ENCODE measurements at regions of chr4 and their contacts with region 1.

Region 1: GRCh38 chr4:5998333-5998936 is 19.8 kb downstream of the C4orf50 start:
- DNase-seq: no peak
- ATAC-seq: peak; percentile 94
- H3K4me3 ChIP-seq: no peak overlapping the region
- H3K27ac ChIP-seq: no peak overlapping the region
- H3K4me1 ChIP-seq: peaks cover 11% of the 10 kb centered on the region
- H3K27me3 ChIP-seq: no peaks in the 10 kb centered on the region; a peak in 2 of 4 replicates
- CTCF ChIP-seq: peak; percentile 93 to 98 (median 94)
- EP300 ChIP-seq: no peak
- POLR2A ChIP-seq: no peak
- RAD21 ChIP-seq: peak; percentile 91

Region 2: DNA sequence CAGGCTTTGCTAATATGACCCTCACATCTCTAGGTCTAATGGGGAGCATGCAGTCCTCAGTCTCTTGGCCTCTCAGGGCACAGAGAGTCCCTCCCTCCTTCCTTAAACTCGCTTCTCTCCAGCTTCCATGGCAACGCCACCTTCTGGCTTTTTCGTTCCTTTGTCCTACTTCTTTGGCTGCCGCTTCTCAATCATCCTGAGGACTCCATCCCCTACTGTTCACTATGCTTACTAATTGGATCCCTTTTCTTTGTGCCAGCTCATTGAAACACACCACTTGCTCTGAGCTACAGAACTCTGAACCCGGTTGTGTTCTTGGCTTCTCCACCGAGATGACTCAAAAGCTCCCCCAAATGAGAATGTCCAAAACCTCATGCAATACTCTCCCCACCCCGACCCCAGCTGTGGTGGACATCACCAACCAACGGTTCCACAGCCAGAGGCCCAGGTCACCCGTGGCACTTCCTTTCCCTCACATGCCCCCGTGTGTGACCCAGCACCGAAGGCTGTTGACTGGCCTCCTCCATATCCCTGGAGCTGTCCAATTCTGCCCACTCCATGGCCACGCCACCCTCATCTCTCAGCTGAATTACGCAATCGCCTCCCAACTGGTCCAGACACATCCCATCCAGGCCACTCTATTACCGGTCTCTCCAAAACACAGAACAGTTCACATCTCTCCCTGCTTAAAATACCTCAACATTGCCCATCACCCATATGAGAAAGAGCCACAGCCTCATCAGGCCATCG is 140.2 kb before region 1 on chr4:
- CTCF ChIA-PET with region 1: no interaction called
- POLR2A ChIA-PET with region 1: no interaction called
- RAD21 ChIA-PET with region 1: no interaction called
- SMC1A ChIA-PET with region 1: no interaction called
- in situ Hi-C with region 1: no loop called
- intact Hi-C with region 1: no loop called
- DNase-seq: no peak
- ATAC-seq: no peak
- H3K4me3 ChIP-seq: no peak overlapping the region
- H3K27ac ChIP-seq: no peak overlapping the region
- H3K4me1 ChIP-seq: no peaks in the 10 kb centered on the region
- H3K27me3 ChIP-seq: no peaks in the 10 kb centered on the region; a peak in 1 of 4 replicates
- CTCF ChIP-seq: no peak
- EP300 ChIP-seq: no peak
- POLR2A ChIP-seq: no peak
- RAD21 ChIP-seq: no peak

Region 3: DNA sequence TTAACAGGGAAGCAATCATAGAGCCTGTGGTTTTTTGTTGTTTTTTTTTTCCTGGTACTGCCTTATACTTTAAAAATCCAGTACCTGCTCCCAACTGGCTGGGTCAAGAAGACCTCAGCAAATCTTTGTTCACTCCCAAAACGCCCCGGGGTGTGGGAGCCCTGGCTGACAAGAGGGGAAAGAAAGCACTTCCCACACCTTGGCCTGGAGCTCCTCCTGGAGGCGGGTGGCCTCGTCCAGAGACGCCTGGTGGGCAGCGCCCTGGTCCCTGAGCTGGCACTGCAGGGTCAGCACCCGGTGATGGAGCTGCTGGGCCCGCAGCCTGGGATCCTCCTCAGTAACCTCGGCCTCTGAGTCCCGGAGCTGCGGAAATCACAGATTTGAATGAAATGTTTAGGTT is 18.5 kb before region 1 on chr4:
- CTCF ChIA-PET with region 1: interaction called, 21 read pairs
- POLR2A ChIA-PET with region 1: interaction called, 4 read pairs
- RAD21 ChIA-PET with region 1: no interaction called
- SMC1A ChIA-PET with region 1: interaction called, 4 read pairs
- in situ Hi-C with region 1: no loop called
- intact Hi-C with region 1: no loop called
- DNase-seq: no peak
- ATAC-seq: 0 out of 3 replicates have a peak, but pooled peaks have one; percentile 17
- H3K4me3 ChIP-seq: no peak overlapping the region
- H3K27ac ChIP-seq: no peak overlapping the region
- H3K4me1 ChIP-seq: peaks cover 6% of the 10 kb centered on the region
- H3K27me3 ChIP-seq: peaks cover 0 to 5% of the 10 kb centered on the region in 2 experiments; a peak in 2 of 4 replicates
- CTCF ChIP-seq: peak; percentile 31 to 35 (median 31); a peak in 4 of 6 replicates
- EP300 ChIP-seq: no peak
- POLR2A ChIP-seq: no peak
- RAD21 ChIP-seq: peak; percentile 48

Region 4: DNA sequence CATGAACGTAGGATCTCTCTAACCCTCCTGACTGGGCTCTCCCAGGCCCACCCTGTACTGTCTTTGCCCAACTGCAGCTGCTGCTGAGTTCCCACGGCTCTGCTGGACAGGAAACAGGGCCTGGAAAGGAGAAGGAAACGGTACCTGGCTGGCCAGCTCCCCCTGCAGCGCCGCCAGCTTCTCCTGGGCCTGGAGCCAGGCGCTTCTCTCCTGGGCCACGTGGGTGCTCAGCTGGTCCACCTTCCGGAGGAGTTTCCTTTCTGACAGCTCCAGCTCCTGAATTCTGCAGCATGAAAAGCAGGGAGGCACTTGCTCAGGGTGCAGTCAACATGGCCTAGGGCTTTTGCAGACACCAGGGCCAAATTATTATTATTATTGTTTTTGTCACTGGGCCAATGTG is 13.3 kb after region 1 on chr4:
- CTCF ChIA-PET with region 1: interaction called, 13 read pairs
- POLR2A ChIA-PET with region 1: no interaction called
- RAD21 ChIA-PET with region 1: no interaction called
- SMC1A ChIA-PET with region 1: no interaction called
- in situ Hi-C with region 1: no loop called
- intact Hi-C with region 1: no loop called
- DNase-seq: no peak
- ATAC-seq: no peak
- H3K4me3 ChIP-seq: no peak overlapping the region
- H3K27ac ChIP-seq: no peak overlapping the region
- H3K4me1 ChIP-seq: no peaks in the 10 kb centered on the region
- H3K27me3 ChIP-seq: peaks cover 0 to 1% of the 10 kb centered on the region in 2 experiments; a peak in 2 of 4 replicates
- CTCF ChIP-seq: no peak
- EP300 ChIP-seq: no peak
- POLR2A ChIP-seq: no peak
- RAD21 ChIP-seq: no peak

Region 5: GRCh38 chr4:6019316-6020263 is 21.2 kb after region 1 on chr4:
- CTCF ChIA-PET with region 1: interaction called, 19 read pairs
- POLR2A ChIA-PET with region 1: no interaction called
- RAD21 ChIA-PET with region 1: no interaction called
- SMC1A ChIA-PET with region 1: interaction called, 3 read pairs
- in situ Hi-C with region 1: no loop called
- intact Hi-C with region 1: no loop called
- DNase-seq: no peak
- ATAC-seq: peak; percentile 80
- H3K4me3 ChIP-seq: no peak overlapping the region
- H3K27ac ChIP-seq: no peak overlapping the region
- H3K4me1 ChIP-seq: no peaks in the 10 kb centered on the region
- H3K27me3 ChIP-seq: no peaks in the 10 kb centered on the region; a peak in 1 of 4 replicates
- CTCF ChIP-seq: peak; percentile 59 to 89 (median 76)
- EP300 ChIP-seq: no peak
- POLR2A ChIP-seq: no peak
- RAD21 ChIP-seq: peak; percentile 46

Region 6: GRCh38 chr4:6087673-6088341 is 89.4 kb after region 1 on chr4:
- CTCF ChIA-PET with region 1: interaction called, 4 read pairs
- POLR2A ChIA-PET with region 1: no interaction called
- RAD21 ChIA-PET with region 1: interaction called, 3 read pairs
- SMC1A ChIA-PET with region 1: no interaction called
- in situ Hi-C with region 1: no loop called
- intact Hi-C with region 1: loop called (anchors 2 kb)
- DNase-seq: no peak
- ATAC-seq: no peak
- H3K4me3 ChIP-seq: no peak overlapping the region
- H3K27ac ChIP-seq: no peak overlapping the region
- H3K4me1 ChIP-seq: no peaks in the 10 kb centered on the region
- H3K27me3 ChIP-seq: no peaks in the 10 kb centered on the region
- CTCF ChIP-seq: peak; percentile 24 to 42 (median 31); a peak in 4 of 6 replicates
- EP300 ChIP-seq: no peak
- POLR2A ChIP-seq: no peak
- RAD21 ChIP-seq: peak; percentile 24; the same call in 1 of the 2 replicates

Region 7: DNA sequence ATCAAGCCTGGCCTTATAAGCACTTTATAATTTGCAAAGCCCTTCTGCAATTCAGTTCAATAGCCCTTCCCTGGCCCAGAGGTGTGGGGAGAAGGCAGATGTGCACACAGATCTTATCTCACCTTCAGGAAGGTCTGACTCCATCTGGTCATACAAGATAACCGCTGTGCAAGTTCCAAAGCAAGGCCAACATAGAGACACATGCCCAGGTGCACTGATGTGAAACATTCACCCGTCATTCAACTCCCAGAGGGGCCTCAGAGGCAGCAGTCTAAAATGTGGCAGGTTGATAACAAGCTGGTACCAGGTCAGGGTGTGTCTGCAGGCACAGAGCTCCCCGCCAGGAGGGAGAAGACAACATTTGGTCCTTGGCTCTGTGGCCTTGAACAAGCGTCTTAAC is 260.3 kb after region 1 on chr4:
- CTCF ChIA-PET with region 1: interaction called, 80 read pairs
- POLR2A ChIA-PET with region 1: no interaction called
- RAD21 ChIA-PET with region 1: no interaction called
- SMC1A ChIA-PET with region 1: no interaction called
- in situ Hi-C with region 1: no loop called
- intact Hi-C with region 1: loop called (anchors 5 kb)
- DNase-seq: no peak
- ATAC-seq: peak; percentile 45
- H3K4me3 ChIP-seq: no peak overlapping the region
- H3K27ac ChIP-seq: no peak overlapping the region
- H3K4me1 ChIP-seq: no peaks in the 10 kb centered on the region; the same call in 1 of the 2 replicates
- H3K27me3 ChIP-seq: no peaks in the 10 kb centered on the region
- CTCF ChIP-seq: no peak
- EP300 ChIP-seq: no peak
- POLR2A ChIP-seq: no peak
- RAD21 ChIP-seq: no peak